Activated CD4-positive, alpha-beta T cell treated with anti-CD3 and anti-CD28 coated beads, Interleukin-2, amount 10 ng/mL, durations not matched to agents 24 days and 14 days (primary cell): ENCODE measurements at regions of chr1 and their contacts with region 1.

Region 1: DNA sequence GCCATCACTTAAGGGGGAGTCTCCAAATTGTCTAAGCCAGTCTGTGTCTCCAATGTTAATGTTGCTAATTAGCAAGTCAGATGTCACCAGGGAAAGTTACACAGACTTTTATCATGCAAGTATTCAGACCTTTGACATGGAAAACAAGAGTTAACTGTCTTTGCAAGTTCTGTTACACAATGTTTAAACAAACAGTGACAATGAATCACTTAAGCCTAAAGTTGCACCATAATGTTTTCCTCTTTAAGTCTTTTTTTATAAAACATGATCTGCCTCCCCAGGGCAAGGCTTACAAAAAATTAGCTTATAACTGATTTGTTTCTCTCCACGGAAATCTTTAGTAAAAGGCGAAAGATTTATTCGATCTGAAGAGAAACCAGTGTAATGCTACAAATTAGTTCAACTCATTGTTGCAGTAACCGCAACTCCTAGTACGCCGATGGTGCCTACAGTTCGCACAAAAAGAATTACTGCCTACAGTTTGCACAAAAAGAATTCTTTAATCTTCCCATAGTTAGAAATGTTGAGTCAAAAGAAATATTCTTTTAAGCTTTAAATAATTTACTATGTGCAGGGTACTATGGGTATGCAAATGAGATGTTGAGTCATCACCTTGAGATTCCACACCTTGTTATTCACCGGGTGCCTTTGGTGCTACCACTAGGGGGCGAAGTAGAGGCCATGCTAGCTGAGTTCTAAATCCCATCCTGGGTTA is 45.3 kb downstream of the HHAT start:
- DNase-seq: peak; percentile 88
- H3K4me3 Mint-ChIP-seq: no peak overlapping the region
- H3K27ac Mint-ChIP-seq: peak overlapping the region; percentile 75
- H3K4me1 Mint-ChIP-seq: peaks cover 9% of the 10 kb centered on the region
- H3K27me3 Mint-ChIP-seq: peaks cover 13% of the 10 kb centered on the region

Region 2: DNA sequence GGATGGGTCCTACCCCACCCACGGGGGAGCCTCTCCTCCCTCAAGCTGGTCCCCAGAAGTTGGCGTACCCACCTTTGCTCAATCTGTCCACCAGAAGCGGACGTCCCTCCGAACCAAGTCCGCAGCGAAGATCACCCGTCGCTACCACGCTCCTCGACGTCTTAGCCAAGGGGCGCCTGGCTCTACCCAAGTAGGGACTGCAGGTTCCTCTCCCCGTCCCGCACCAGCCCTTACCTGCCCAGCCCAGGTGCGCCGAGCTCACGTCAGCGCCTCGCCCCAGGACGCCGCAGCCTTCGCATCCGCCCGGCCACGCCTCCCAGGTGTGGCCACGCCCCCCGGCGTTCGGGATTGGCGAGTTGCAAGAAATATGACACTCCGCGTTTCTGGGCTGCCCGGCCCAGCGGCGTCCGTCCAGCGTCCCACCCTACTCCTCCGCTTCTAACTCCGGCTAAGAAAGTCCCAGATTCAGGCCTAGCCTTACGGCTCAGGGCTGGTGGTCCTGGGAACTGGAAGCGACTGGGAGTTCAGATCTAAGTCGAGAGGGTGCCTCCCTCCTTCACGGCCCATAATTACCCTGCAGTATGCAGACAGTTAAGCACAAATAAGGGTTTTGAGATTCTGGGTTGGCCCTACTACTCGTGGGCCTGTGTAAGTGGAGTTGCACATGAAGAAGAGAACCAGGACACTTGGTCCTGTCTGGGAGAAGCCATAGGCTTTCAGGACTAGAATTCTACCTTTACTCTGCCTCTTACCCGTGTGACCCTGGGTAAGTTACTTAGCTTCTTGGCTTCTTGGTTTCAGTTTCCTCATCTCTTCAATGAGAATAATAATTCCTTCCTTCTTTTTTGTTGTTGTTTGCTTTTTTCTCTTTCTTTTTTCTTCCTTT is 567.9 kb before region 1 on chr1 and contains the start of gene IRF6:
- intact Hi-C with region 1: no loop called
- DNase-seq: peak; percentile 71
- H3K4me3 Mint-ChIP-seq: peak within 1 kb of the TSS; percentile 66
- H3K27ac Mint-ChIP-seq: no peak within 1 kb of the TSS
- H3K4me1 Mint-ChIP-seq: peaks cover 14% of the 10 kb centered on the region
- H3K27me3 Mint-ChIP-seq: peaks cover 11% of the 10 kb centered on the region
- total RNA-seq, gene IRF6: 0.07 TPM in 1 of 2 replicates, not detected in the other

Region 3: DNA sequence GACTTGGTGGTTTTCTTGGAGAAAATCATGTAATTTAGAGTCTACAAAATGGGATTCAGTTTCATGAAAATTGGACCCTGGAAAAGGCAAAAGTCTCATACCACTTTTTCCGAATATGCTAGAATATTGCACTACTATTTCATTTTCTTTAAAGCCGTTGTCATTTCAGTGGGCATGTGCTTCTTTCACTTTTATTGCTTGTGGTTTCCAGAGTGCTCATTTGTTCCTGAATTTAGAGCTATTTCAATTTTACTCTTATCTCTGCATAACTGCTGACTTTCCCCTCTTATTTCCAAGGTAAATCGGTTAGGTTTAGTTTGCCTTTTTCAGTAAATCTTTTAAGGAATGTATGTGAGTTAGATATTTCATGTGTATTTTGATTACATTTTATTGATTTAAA is 33.7 kb before region 1 on chr1:
- intact Hi-C with region 1: loop called (anchors 1 kb)
- DNase-seq: no peak
- H3K4me3 Mint-ChIP-seq: no peak overlapping the region
- H3K27ac Mint-ChIP-seq: peak overlapping the region; percentile 50
- H3K4me1 Mint-ChIP-seq: peaks cover 19% of the 10 kb centered on the region
- H3K27me3 Mint-ChIP-seq: peaks cover 14% of the 10 kb centered on the region

Region 4: GRCh38 chr1:210347112-210347511 is 26.9 kb before region 1 on chr1:
- intact Hi-C with region 1: loop called (anchors 1 kb)
- DNase-seq: no peak
- H3K4me3 Mint-ChIP-seq: no peak overlapping the region
- H3K27ac Mint-ChIP-seq: no peak overlapping the region
- H3K4me1 Mint-ChIP-seq: peaks cover 8% of the 10 kb centered on the region
- H3K27me3 Mint-ChIP-seq: peaks cover 2% of the 10 kb centered on the region

Region 5: GRCh38 chr1:210901981-210902770 is 528.1 kb after region 1 on chr1:
- intact Hi-C with region 1: no loop called
- DNase-seq: no peak
- H3K4me3 Mint-ChIP-seq: no peak overlapping the region
- H3K27ac Mint-ChIP-seq: no peak overlapping the region
- H3K4me1 Mint-ChIP-seq: no peaks in the 10 kb centered on the region
- H3K27me3 Mint-ChIP-seq: peaks cover 15% of the 10 kb centered on the region